Brain microvascular endothelial cell (primary cell): ENCODE measurements at regions of chr1 and their contacts with region 1.

Region 1: GRCh38 chr1:15337656-15338402 is 71.9 kb upstream of the EFHD2 start:
- DNase-seq: peak; percentile 82
- H3K4me3 ChIP-seq: no peak overlapping the region
- H3K27ac ChIP-seq: peak overlapping the region; percentile 60
- H3K27me3 ChIP-seq: no peaks in the 10 kb centered on the region
- CTCF ChIP-seq: no peak

Region 2: DNA sequence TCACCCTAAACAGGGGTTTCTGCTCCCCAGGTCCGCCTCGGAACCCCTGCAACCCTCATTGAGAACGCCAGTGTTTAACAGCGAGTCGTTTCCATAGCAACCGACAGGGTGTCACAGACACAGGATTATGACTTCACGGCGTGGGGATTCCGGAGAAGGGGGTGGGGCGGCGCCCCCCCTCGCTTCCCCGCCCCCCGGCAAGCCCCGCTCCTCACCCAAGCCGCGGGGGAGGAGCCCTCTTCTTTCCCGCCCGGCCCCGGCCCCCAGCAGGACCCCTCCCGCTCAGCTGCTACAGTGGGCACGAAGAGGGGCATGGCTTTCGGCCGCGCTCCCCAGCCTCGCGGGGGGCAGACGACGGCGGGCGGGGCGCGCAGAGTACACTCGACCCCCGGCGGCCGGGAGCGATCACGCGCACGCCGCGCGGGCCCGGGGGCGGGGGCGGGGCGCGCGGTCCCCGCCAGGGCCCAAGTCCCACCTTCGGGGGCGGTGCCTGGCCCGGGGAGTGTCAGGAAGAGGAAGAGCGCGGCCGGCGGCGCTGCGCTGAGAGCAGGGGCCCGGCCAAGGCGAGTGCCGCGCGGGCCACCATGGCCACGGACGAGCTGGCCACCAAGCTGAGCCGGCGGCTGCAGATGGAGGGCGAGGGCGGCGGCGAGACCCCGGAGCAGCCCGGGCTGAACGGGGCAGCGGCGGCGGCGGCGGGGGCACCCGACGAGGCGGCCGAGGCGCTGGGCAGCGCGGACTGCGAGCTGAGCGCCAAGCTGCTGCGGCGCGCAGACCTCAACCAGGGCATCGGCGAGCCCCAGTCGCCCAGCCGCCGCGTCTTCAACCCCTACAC is 71.8 kb after region 1 on chr1 and contains the start of gene EFHD2:
- in situ Hi-C with region 1: loop called (anchors 10 kb)
- DNase-seq: peak; percentile 75
- H3K4me3 ChIP-seq: peak within 1 kb of the TSS; percentile 81
- H3K27ac ChIP-seq: peak within 1 kb of the TSS; percentile 24
- H3K27me3 ChIP-seq: no peaks in the 10 kb centered on the region
- CTCF ChIP-seq: no peak